ENCODE measurements at regions of chr10 and their contacts with region 1.

Region 1: GRCh38 chr10:90862908-90863514 is 5.2 kb upstream of the HTR7 start:
- DNase-seq: peak in 1 of 7 donors; percentile 5
- H3K4me3 ChIP-seq: no peak overlapping the region
- H3K27ac ChIP-seq: no peak overlapping the region
- H3K4me1 ChIP-seq: peaks cover 0 to 5% of the 10 kb centered on the region in 2 donors
- H3K27me3 ChIP-seq: peaks cover 15% of the 10 kb centered on the region
- CTCF ChIP-seq: peak; percentile 53 to 77 (median 66)
- POLR2A ChIP-seq: no peak

Region 2: DNA sequence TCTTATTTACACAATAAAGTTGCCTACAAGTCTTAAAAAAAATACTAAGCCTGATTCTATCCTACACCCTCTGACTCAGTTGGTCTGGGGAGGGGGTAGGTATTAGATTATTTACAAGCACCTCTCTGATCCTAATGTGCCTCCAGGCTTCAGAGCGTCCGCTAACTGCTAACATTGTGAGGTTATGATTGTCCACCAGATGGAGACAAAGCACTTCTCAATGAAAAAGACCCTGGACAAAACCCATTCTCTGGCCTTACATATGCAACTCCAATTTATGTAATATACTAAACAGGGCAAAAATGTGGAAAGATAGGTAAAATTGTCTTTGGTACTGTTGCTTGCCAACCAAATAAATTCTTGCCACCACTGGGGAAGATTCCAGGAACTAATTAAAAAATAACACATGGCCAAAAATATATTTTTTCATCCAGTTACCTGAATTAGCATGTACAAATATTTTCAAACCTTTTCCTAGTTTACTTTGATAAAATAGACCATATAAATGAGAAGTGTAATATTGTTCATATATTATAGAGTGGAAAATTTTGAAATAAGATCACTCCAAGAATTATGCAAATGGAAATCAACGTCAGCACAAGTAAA is 1069.3 kb before region 1 on chr10:
- intact Hi-C with region 1: loop called in 1 of 2 experiments (anchors 10 kb)
- DNase-seq: peak; percentile 17 to 64 (median 37)
- H3K4me3 ChIP-seq: no peak overlapping the region
- H3K27ac ChIP-seq: no peak overlapping the region
- H3K4me1 ChIP-seq: no peaks in the 10 kb centered on the region
- H3K27me3 ChIP-seq: no peaks in the 10 kb centered on the region
- CTCF ChIP-seq: peak; percentile 61 to 85 (median 72)
- POLR2A ChIP-seq: no peak

Region 3: GRCh38 chr10:90741926-90742565 is 121.0 kb before region 1 on chr10:
- intact Hi-C with region 1: loop called in 1 of 2 experiments (anchors 10 kb)
- DNase-seq: no peak
- H3K4me3 ChIP-seq: no peak overlapping the region
- H3K27ac ChIP-seq: no peak overlapping the region
- H3K4me1 ChIP-seq: no peaks in the 10 kb centered on the region
- H3K27me3 ChIP-seq: no peaks in the 10 kb centered on the region
- CTCF ChIP-seq: no peak
- POLR2A ChIP-seq: no peak

Region 4: DNA sequence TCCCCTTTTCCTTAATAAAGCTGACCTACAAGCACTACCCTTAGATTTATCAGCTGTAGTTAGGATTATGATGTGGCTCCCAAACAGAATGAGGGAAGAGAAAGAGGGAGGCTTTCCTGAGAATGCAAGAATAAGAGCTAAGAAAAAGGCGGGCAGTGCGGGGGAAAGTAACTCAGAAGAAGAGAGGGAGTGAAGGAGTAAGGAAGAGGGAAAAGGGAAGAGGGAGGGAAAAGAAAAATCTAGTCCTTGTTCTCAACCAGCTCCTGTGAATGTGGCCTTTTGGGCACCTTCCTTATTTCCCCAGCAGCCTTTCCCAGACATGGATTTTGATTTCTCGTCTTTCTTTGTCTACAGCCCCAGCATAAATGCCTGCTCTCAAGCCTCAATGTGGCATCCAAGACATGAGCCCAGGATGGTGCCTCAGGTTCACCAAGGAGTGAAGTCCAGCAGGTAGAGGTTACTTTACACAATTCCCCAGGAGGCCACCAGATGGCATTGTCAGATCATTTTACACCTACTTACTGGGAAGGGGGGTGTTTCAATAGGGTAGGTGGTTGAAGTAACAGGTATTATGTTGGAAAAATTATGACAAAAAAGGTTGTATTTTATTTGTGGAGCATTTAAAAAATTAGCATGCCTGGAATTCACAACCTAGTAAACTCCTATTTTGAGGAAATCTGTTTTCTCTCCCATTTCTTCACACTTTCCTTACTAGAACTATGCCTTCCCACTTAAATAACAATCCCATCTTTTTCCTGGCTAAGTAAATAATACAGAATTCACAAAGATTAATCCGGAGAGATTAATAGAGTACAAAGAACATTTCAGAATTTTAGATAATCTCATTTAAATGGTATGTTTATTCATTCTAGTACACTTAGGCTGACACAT is 111.7 kb before region 1 on chr10:
- intact Hi-C with region 1: loop called (anchors 2 to 10 kb)
- DNase-seq: peak in 6 of 7 donors; percentile 25 to 66 (median 39)
- H3K4me3 ChIP-seq: no peak overlapping the region
- H3K27ac ChIP-seq: no peak overlapping the region
- H3K4me1 ChIP-seq: no peaks in the 10 kb centered on the region
- H3K27me3 ChIP-seq: peaks cover 9% of the 10 kb centered on the region
- CTCF ChIP-seq: peak; percentile 57 to 80 (median 69)
- POLR2A ChIP-seq: no peak